GM12878 (cell line): ENCODE measurements at regions of chr3 and their contacts with region 1.

Region 1: DNA sequence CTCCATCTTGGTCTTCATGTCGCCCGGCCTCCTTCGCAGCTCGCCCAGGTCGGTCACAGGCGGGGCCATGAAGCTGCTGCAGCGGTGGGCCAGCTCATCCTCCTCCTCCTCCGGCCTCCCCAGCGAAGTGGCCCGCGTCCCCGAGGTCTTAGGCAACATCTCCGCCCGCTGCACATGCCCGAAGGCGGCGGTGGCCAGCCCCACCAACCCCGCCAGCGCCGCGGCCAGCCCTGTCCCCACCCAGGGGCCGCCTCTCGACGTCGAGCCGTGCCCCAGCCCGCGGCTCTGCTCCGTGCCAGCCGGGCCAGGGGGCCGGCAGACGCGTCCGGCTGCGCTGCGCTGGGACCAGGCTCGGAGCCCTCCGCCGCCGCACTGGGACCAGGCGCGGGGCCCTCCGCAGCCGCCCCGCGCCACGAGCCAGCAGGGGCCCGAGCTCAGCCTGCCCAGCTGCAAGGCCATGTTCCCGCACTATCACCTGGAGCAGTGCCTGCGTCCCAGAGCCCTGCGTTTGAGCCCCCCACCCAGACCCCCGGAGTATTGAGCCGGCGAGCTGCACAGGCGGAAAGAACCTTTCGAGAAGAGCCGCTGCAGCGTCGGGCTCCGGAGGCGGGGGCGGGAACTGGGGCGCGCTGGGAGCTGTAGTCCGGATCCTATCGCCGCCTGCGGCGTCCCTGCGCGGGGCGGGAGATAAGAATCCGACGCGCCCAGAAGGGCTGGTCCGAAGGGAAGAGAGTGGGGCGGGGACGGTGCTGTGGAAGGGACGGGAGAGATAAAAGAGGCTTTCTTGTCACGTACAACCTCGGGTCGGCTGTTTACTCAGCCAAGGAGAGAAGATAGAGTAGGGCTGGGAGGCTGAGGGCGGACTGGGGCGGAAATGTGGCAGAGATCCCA is at the start of gene CPOX:
- DNase-seq: peak; percentile 76
- ATAC-seq: peak; percentile 96
- H3K4me3 ChIP-seq: peak within 1 kb of the TSS; percentile 81
- H3K27ac ChIP-seq: peak within 1 kb of the TSS; percentile 84
- H3K4me1 ChIP-seq: peaks cover 7% of the 10 kb centered on the region
- H3K27me3 ChIP-seq: no peaks in the 10 kb centered on the region
- CTCF ChIP-seq: no peak
- EP300 ChIP-seq: no peak
- POLR2A ChIP-seq: peak; percentile 76
- RAD21 ChIP-seq: 0 out of 2 replicates have a peak, but pooled peaks have one; percentile 1
- polyA plus RNA-seq, gene CPOX: 40.7 to 45.8 TPM

Region 2: DNA sequence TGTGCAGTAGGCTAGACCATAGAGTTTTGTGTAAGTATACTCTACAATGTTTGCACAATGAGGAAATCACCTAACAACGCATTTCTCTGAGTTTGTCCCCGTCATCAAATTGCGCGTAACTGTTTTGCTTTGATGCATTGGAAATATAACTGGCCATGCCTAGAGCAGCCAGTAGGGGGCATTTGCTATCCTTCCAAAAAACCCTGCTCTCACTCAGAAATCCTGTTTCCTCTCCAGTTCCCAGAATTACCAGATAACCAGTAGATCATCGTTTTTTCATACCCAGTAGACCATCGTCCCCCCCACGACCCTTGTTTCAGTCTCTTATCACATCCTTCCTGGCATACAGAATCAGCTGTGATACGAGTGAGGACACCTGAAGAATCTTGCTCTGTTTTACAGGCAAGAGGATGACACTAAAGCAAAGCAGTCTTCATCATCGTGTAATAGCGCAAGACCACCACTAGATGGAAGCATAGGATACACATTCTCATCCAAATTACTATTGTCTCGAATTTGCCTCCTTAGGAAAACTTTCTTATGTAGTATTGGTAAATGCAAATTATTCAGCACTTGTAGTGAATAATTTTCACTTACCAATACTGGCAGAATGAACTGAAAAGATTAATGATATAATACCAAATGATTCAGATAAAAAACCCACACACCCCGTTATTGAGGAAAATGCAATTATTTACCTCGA is 553.8 kb before region 1 on chr3:
- CTCF ChIA-PET with region 1: interaction called, 15 read pairs
- POLR2A ChIA-PET with region 1: no interaction called
- RAD21 ChIA-PET with region 1: interaction called, 3 read pairs
- SMC1A ChIA-PET with region 1: interaction called, 13 read pairs
- in situ Hi-C with region 1: loop called (anchors 10 kb)
- intact Hi-C with region 1: loop called (anchors 5 kb)
- DNase-seq: peak; percentile 79
- ATAC-seq: peak; percentile 97
- H3K4me3 ChIP-seq: peak overlapping the region; percentile 66; the same call in 1 of the 2 replicates
- H3K27ac ChIP-seq: no peak overlapping the region
- H3K4me1 ChIP-seq: no peaks in the 10 kb centered on the region
- H3K27me3 ChIP-seq: no peaks in the 10 kb centered on the region; a peak in 1 of 4 replicates
- CTCF ChIP-seq: peak; percentile 61 to 95 (median 67)
- EP300 ChIP-seq: no peak
- POLR2A ChIP-seq: no peak
- RAD21 ChIP-seq: peak; percentile 86

Region 3: GRCh38 chr3:98531622-98532274 is 61.5 kb before region 1 on chr3 and contains the start of gene GPR15:
- CTCF ChIA-PET with region 1: interaction called, 8 read pairs
- POLR2A ChIA-PET with region 1: interaction called, 3 read pairs
- RAD21 ChIA-PET with region 1: interaction called, 7 read pairs
- SMC1A ChIA-PET with region 1: interaction called, 5 read pairs
- in situ Hi-C with region 1: no loop called
- intact Hi-C with region 1: loop called (anchors 2 kb)
- DNase-seq: no peak
- ATAC-seq: peak; percentile 44
- H3K4me3 ChIP-seq: peak within 1 kb of the TSS; percentile 81
- H3K27ac ChIP-seq: peak within 1 kb of the TSS; percentile 97
- H3K4me1 ChIP-seq: peaks cover 3% of the 10 kb centered on the region; the same call in 1 of the 2 replicates
- H3K27me3 ChIP-seq: no peaks in the 10 kb centered on the region
- CTCF ChIP-seq: no peak
- EP300 ChIP-seq: no peak; a peak in 1 of 4 replicates
- POLR2A ChIP-seq: no peak
- RAD21 ChIP-seq: no peak
- polyA plus RNA-seq, gene GPR15: 70.7 to 145 TPM

Region 4: DNA sequence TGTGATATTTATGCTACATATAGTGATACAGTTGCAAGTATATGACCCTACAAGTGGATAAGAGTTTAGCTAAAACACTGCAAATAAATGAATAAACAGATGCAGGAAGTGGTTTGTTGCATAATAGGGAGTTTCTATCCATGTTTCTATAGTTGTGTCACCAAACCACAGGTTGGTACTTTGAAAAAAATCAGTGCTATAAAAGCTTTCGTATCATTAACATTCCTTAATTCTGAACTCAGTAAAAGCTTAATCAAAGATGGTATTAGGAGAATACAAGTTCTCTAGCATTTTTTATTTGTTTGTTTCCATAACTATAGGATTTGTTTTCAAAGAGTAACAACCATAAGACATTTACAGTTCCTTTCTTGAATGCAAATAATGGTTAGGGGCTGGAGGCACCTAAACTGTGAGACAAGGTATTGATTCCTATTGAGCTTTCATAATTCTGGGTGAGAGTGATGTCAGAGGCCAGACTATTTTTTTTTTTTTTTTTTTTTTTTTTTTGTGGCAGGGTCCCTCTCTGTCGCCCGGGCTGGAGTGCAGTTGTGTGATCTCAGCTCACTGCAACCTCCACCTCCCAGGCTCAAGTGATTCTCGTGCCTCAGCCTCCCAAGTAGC is 29.5 kb before region 1 on chr3:
- CTCF ChIA-PET with region 1: interaction called, 6 read pairs
- POLR2A ChIA-PET with region 1: interaction called, 7 read pairs
- RAD21 ChIA-PET with region 1: interaction called, 5 read pairs
- SMC1A ChIA-PET with region 1: interaction called, 25 read pairs
- in situ Hi-C with region 1: no loop called
- intact Hi-C with region 1: no loop called
- DNase-seq: no peak
- ATAC-seq: peak; percentile 40
- H3K4me3 ChIP-seq: peak overlapping the region; percentile 57
- H3K27ac ChIP-seq: peak overlapping the region; percentile 100
- H3K4me1 ChIP-seq: peaks cover 46% of the 10 kb centered on the region
- H3K27me3 ChIP-seq: no peaks in the 10 kb centered on the region
- CTCF ChIP-seq: no peak
- EP300 ChIP-seq: peak; percentile 92 to 94
- POLR2A ChIP-seq: no peak; the same call in 1 of the 2 replicates
- RAD21 ChIP-seq: no peak

Region 5: DNA sequence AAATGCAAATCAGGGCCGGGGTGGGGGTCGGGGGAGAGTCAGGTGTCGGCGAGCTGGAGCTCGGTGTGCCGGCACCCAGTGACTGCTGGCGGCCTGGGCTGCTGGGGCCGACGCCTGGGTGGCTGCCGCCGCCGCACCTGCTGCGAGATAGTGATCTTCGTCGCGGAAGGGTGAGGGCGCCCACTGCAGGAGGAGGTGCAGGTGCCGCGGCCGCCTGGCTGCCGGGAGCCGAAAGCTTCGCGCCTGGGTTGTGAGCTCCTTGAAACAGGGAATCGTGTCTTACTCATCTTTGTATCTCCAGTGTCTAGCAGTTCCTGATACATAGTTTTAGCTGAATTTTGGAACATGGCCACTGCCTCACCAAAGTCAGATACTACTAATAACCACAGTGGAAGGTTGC is 64.2 kb after region 1 on chr3:
- CTCF ChIA-PET with region 1: interaction called, 31 read pairs
- POLR2A ChIA-PET with region 1: no interaction called
- RAD21 ChIA-PET with region 1: interaction called, 3 read pairs
- SMC1A ChIA-PET with region 1: interaction called, 6 read pairs
- in situ Hi-C with region 1: no loop called
- intact Hi-C with region 1: no loop called
- DNase-seq: no peak
- ATAC-seq: peak; percentile 98
- H3K4me3 ChIP-seq: no peak overlapping the region; the same call in 1 of the 2 replicates
- H3K27ac ChIP-seq: no peak overlapping the region
- H3K4me1 ChIP-seq: peaks cover 3% of the 10 kb centered on the region
- H3K27me3 ChIP-seq: no peaks in the 10 kb centered on the region
- CTCF ChIP-seq: peak; percentile 62 to 71 (median 70)
- EP300 ChIP-seq: no peak
- POLR2A ChIP-seq: no peak
- RAD21 ChIP-seq: peak; percentile 73

Region 6: DNA sequence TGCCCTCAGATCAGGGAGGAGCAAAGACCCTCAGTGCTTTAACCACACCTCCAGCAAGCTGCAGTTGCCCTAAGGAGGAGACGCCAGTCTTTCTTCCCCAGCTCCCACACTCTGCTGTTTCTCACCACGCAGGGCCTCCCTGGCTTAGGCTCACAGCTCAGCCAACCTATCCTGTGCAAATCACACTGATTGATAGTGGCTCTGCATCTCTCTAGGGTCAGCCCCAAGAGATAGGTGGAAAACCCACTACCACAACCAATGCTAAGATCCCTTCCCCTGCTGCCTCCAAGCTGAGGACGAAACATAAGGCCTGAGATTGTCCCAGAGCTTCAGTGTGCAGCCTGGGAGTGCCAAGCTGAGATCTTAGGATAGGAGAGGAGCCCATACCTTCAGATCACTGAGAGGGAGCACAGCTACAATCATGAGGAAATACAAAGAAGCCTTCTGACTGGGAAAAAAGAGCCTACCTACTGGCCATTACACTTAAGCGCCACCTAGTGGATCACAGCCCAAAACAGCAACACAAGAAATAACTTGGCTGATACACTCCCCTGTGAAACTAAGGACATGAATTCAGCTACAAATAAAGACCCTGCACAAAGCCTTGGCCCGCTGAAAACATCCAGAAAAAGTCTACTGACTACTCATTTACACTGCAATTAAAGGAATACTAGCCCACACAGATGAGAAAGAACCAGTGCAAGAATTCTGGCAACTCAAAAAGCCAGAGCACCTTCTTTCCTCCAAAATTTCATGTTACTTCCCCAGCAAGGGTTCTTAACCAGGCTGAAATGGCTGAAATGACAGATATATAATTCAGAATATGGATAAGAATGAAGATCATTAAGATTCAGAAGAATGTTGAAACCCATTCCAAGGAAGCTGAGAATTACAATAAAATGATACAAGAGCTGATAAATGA is 579.7 kb after region 1 on chr3:
- CTCF ChIA-PET with region 1: no interaction called
- POLR2A ChIA-PET with region 1: no interaction called
- RAD21 ChIA-PET with region 1: no interaction called
- SMC1A ChIA-PET with region 1: no interaction called
- in situ Hi-C with region 1: loop called (anchors 10 kb)
- intact Hi-C with region 1: no loop called
- DNase-seq: peak; percentile 9
- ATAC-seq: peak; percentile 88
- H3K4me3 ChIP-seq: no peak overlapping the region
- H3K27ac ChIP-seq: no peak overlapping the region
- H3K4me1 ChIP-seq: no peaks in the 10 kb centered on the region
- H3K27me3 ChIP-seq: no peaks in the 10 kb centered on the region
- CTCF ChIP-seq: peak; percentile 65 to 73 (median 68)
- EP300 ChIP-seq: no peak
- POLR2A ChIP-seq: no peak
- RAD21 ChIP-seq: peak; percentile 73